ENCODE measurements at regions of chr9 and their contacts with region 1.

Region 1: DNA sequence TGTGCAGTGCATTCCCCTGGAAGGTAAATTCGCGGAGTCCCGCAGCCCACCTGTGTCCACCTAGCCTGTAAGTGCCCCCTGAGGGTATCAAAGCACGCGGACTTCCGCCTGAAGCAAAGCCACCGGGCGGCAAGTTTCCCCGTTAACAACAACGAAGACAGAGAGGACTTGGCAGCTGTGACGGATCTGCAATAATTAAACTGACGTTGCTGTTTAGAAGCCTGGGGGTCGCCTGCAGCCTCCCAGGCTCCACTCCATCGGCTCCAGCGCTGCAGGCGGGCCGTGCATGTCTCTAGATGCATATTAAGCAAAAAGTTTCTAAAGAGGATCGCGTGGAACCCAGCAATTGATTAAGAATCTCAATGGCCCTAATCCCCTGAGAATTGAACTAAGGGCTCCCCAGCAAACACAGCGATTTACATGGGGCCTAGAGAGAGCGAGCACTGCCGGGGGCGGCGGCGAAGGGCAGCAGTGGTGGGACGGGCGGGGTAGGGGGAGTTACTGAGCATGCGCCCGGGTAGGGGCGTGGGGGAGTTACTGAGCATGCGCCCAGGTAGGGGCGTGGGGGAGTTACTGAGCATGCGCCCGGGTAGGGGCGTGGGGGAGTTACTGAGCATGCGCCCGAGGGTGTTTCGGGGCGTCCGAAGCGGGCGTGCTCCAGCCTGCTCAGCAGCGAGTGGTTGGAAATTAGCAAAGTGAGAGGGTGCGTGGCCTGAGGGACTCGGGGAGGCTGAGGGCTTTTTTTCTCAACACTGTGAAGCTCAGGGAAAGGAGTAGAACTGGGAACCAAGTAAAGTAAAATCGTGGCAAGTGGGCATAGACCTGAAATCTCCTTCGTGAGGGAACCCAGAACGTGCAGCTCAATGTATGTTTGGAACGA is 255.2 kb downstream of the DOCK8 start:
- DNase-seq: peak; percentile 73 to 79
- H3K4me3 ChIP-seq: peak overlapping the region; percentile 78
- H3K27ac ChIP-seq: peak overlapping the region; percentile 67
- H3K4me1 ChIP-seq: peaks cover 23% of the 10 kb centered on the region
- H3K27me3 ChIP-seq: no peaks in the 10 kb centered on the region
- CTCF ChIP-seq: no peak

Region 2: DNA sequence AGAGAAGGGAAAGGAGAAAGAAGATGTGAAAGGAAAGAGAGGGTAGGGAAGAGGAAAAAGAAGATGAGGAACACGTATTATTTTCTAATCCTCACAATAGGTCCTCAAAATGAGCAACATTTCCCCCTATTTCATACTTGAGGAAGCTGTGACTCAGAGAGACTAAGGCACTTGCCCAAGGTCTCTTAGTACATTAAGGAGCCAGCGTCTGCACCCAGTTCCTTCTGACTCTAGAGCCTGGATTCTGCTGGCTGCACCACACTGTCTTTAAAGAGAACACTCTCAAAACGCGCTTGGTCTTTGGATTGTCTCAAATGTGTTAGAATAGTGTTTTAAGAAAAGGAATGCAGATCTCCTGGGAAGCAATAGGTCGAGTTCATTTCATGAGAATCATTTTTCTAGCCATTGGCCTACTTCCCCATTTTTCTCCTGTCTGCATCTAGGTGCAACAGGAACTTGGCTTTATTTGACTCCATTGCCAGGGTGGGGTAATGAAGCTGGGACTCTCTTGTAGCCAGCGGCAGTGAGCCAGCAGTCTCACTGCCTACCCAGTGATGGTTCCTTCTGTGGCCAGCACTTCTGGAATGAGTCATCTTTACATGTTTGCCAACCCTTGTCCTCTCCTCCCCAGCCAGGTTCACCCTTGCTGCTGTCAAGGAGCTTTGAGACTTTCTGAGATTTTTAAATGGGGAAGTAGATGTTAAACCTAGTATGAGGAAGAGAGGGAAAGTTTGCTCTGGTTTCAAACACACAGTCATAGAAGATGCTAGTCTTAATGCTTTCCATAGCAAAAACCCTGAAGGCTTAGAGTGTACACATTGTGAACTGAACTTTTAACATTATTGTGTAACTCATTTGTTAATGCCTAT is 172.6 kb before region 1 on chr9:
- CTCF ChIA-PET with region 1: no interaction called
- POLR2A ChIA-PET with region 1: no interaction called
- intact Hi-C with region 1: no loop called
- DNase-seq: peak; percentile 28 to 84
- H3K4me3 ChIP-seq: no peak overlapping the region
- H3K27ac ChIP-seq: peak overlapping the region; percentile 38; the same call in 1 of the 2 replicates
- H3K4me1 ChIP-seq: peaks cover 7% of the 10 kb centered on the region; the same call in 1 of the 2 replicates
- H3K27me3 ChIP-seq: no peaks in the 10 kb centered on the region
- CTCF ChIP-seq: no peak

Region 3: DNA sequence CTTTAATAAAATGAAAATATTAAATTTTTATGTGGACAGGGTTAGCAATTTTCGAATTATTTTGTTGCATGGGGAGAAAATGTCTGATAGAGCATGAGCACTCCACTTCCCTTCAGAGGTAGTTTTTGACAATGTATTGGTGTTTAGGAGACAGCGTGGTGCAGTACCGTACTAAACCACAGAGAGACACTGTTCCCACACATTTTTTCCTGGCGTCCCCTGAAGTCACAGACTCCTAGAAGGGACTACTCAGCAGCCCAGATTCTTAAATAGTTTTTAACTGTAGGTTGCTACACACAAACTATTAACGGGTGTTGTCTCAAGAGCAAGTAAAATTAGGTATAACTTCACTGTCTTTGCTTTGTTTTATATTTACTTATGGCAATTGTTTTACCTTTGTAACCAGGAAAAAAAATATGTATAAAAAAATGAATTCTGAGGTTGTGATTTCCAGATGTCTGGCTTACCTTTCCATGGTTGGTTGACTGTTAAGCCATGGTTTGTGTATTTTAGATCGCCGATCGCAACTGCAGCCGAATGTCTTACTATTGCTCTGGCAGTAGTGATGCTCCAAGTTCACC is 84.0 kb before region 1 on chr9:
- CTCF ChIA-PET with region 1: no interaction called
- POLR2A ChIA-PET with region 1: no interaction called
- intact Hi-C with region 1: loop called (anchors 5 kb)
- DNase-seq: peak; percentile 47 to 52
- H3K4me3 ChIP-seq: no peak overlapping the region
- H3K27ac ChIP-seq: no peak overlapping the region
- H3K4me1 ChIP-seq: no peaks in the 10 kb centered on the region
- H3K27me3 ChIP-seq: no peaks in the 10 kb centered on the region
- CTCF ChIP-seq: peak; percentile 93

Region 4: GRCh38 chr9:426264-426663 is 43.6 kb before region 1 on chr9:
- CTCF ChIA-PET with region 1: no interaction called
- POLR2A ChIA-PET with region 1: no interaction called
- intact Hi-C with region 1: loop called (anchors 2 kb)
- DNase-seq: no peak
- H3K4me3 ChIP-seq: no peak overlapping the region
- H3K27ac ChIP-seq: peak overlapping the region; percentile 67
- H3K4me1 ChIP-seq: peaks cover 31% of the 10 kb centered on the region
- H3K27me3 ChIP-seq: no peaks in the 10 kb centered on the region
- CTCF ChIP-seq: no peak